ENCODE measurements at regions of chr1 and their contacts with region 1.

Region 1: DNA sequence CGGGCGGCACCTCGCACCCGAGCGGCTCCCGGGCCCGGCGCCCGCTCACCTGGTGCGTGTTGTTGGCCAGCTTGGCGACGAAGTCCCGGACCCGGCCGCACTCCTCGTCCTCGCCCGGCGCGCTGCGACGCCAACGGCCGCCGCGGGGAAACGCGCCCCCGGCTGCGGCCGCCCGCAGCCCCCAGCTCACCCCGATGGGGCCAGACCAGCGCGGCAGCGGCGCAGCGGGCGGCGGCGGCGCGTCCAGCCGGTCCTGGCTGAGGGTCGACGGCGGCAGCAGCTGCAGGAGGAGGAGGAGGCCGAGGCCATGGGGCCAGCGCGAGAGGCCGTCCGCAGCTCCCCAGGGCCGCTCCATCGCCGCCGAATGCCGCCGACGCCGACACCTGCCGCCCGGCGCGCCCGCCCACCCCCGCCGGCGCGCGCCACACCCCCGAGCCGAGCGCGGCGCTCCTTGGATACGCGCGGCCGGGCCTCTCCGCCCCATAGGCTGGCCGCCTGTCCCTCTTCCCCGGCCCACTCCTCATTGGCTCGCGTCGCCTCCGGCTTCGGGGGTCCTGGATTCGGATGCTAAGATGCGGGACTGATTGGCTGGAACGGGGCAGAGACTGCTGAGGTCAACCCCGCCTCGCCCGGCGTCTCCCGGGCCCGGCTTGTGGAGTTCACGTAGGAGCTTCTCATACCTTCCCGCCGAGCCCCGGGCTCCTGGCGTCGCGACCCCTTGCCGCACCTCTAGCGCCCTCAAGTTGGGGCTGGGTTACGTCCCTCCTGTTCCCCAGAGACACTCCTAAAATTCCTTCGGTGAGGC is at the start of gene SORT1:
- DNase-seq: peak; percentile 71
- CTCF ChIP-seq: peak; percentile 7

Region 2: GRCh38 chr1:109248797-109249642 is 148.7 kb before region 1 on chr1 and contains the start of gene CELSR2:
- CTCF ChIA-PET with region 1: interaction called, 18 read pairs
- POLR2A ChIA-PET with region 1: no interaction called
- DNase-seq: peak; percentile 88
- CTCF ChIP-seq: no peak

Region 3: DNA sequence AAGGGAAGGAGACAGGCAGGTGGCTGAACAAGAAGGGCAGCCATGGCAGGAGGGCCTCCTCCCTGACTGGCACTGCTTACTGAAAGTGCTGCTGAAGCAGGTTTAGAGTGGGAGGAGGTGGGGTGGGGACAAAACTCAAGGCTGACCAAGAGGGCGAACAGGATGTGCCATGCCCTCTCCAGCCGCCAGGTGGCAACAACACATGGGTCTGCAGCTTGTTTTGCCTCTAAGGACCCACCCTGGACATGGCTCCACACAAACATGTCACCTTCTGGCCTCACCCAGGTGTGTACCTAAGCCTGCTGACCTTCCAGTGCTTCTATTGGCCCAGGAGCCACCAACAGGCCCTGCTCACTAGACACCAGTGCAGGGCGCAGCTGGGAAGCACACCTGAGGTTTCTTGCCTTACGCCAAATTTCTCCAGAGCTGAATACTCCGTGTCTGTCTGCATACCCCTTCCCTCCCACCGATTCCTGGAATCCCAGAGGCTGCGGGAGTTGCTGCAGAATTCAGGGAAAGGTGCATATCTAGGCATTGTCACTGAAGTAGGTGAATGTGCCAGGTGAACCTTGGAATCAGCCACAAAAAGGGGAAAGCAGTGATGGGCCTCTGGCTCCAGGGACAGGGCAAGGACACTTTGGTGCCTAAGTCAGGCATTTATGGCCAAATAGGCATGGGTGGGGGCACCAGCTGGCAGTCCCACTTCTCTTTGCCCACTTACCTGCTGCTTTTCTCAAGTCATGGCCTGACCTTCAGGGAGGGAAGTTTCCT is 120.1 kb before region 1 on chr1:
- CTCF ChIA-PET with region 1: interaction called, 197 read pairs
- POLR2A ChIA-PET with region 1: no interaction called
- DNase-seq: peak; percentile 88
- CTCF ChIP-seq: peak; percentile 91

Region 4: GRCh38 chr1:109361649-109362048 is 36.1 kb before region 1 on chr1:
- CTCF ChIA-PET with region 1: no interaction called
- POLR2A ChIA-PET with region 1: no interaction called
- DNase-seq: no peak
- CTCF ChIP-seq: no peak

Region 5: GRCh38 chr1:109386054-109386717 is 11.6 kb before region 1 on chr1:
- CTCF ChIA-PET with region 1: interaction called, 24 read pairs
- POLR2A ChIA-PET with region 1: no interaction called
- DNase-seq: no peak
- CTCF ChIP-seq: no peak